A549 (cell line): ENCODE measurements at regions of chr1 and their contacts with region 1.

Region 1: DNA sequence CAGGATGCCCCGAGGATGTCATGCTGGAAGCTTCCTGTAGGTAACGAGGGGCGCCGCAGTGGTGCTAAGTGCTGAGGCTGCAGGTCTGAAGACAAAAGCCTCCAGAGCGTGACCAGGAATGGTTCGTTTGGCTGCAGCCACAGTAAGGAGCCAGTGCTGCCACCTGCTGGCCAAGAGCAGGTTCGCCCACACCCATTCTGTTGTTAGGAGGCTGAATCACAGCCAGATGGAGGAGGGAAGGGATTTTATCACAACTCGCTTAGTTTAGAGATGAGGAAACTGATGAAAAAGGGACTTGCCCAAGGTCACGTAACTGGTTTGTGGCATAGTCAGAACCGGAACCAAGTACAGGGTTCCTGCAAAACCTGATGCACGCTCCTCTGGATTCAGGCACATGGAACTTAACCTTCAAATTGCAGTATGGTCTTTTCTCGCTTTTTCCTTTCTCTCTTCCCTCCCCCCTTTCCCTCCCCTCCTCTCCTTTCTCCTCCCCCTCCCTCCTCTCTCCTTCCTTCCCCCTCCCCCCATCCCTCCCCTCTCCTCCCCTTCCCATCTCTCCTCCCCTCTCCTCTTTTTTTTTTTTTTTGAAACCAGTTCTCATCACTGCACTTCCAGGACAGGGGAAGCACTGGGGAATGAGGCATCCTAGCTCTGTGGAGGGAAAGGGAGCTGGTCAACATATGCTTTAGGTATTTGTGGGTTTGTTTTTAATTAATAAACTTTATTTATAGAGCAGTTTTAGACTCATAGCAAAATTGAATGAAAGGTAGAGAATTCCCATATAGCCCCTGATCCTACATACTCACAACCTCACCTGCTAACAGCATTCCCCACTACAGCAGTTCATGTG is 81.8 kb downstream of the MPZL1 start:
- DNase-seq: peak; percentile 96 to 97
- ATAC-seq: peak; percentile 98 to 99
- H3K4me3 ChIP-seq: no peak overlapping the region
- H3K27ac ChIP-seq: peak overlapping the region; percentile 41 to 78; a peak in 5 of 6 replicates
- H3K4me1 ChIP-seq: peaks cover 26% of the 10 kb centered on the region
- CTCF ChIP-seq: peak; percentile 95
- EP300 ChIP-seq: no peak
- POLR2A ChIP-seq: no peak
- RAD21 ChIP-seq: peak; percentile 82 to 87

Region 2: DNA sequence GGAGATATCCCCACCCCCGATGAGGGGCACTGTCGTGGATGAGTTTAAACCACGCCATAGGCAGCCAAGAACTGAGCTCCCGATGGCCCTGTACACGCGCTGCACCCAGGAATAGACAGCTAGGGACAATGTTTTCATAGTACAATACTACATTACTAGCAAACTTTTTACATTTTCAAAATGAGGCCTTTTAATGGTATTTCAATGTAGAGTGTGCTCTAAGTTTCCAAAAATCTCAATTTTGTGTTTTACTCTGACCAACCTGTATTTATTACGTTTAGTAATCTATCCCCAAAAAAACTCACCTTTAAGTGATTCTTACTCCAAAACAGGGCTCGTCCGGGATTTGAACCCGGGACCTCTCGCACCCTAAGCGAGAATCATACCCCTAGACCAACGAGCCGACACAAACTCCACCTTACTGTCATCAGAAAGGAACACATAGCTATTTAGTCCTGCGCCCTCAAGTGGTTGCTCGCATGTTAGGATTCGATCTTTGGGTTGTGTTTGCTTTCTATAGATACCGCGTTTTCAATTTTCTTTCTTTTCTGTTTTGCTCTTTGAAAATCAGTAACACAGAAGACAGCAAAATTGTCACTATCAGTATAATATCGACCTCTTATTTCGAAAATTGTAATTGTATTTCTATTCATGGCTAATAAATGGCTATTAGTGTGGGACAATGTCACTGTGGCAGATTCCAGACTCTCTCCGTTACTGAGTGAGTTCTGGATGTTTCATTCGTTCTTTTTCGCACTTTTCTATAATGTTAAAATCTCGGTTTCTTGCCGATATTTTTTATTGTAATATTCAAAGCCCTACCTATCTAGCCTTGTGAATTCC is 88.2 kb before region 1 on chr1:
- CTCF ChIA-PET with region 1: interaction called, 16 read pairs
- POLR2A ChIA-PET with region 1: no interaction called
- DNase-seq: peak; percentile 78 to 92
- ATAC-seq: peak; percentile 30 to 70; a peak in 5 of 6 replicates
- H3K4me3 ChIP-seq: peak overlapping the region; percentile 62
- H3K27ac ChIP-seq: peak overlapping the region; percentile 95 to 98
- H3K4me1 ChIP-seq: peaks cover 20% of the 10 kb centered on the region
- CTCF ChIP-seq: peak; percentile 89
- EP300 ChIP-seq: no peak
- POLR2A ChIP-seq: no peak
- RAD21 ChIP-seq: peak in 1 of 2 experiments; percentile 33; a peak in 2 of 5 replicates